Activated T-helper 2 cell treated with anti-CD3 and anti-CD28 coated beads, Interferon-gamma antibody, Interleukin-2, Interleukin-4, amounts not matched to agents 10 μg/mL and 5 μg/mL and 100 μg/mL, durations not matched to agents 14 hours and 24 hours and 36 hours (primary cell): ENCODE measurements at regions of chr17 and their contacts with region 1.

Region 1: DNA sequence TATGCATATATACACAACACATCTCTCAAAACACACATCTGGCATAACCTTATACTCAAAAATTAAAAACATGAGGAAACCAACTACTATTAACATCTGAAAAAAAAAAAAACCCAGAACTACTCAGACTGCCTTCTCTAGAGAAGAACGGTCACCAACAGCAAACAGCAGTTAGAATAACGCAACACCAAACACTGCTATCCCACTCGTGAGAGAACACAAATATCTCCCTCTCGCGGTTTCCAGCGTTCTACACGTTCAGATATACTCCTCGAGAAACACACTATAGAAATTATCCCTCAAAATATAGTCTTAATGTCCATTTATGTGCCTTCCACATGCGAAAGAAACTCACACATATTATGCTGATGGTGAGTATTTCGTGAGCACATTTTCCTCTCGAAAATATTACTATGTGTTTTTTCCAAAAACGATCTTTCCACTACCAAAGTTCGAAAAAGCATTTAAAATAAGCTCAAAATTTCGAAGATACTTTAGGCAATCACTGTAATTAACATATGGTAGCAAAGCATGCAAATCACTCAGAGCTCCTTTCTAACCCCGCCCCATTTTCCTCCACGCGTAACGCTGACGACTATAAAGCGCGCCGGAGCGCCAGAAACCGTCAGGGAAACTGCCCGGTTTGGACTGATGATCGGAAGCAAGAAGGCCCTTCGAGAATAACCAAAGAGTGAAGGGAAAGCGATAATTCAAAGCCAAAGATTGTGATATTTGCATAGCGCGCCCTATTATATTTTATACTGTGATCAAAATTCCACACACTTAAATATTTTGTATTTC is 60.1 kb downstream of the TEX14 start:
- DNase-seq: peak; percentile 95
- H3K4me3 Mint-ChIP-seq: no peak overlapping the region
- H3K27ac Mint-ChIP-seq: no peak overlapping the region
- H3K4me1 Mint-ChIP-seq: peaks cover 5% of the 10 kb centered on the region
- H3K27me3 Mint-ChIP-seq: no peaks in the 10 kb centered on the region

Region 2: GRCh38 chr17:58337600-58338453 is 293.9 kb before region 1 on chr17:
- intact Hi-C with region 1: loop called (anchors 5 kb)
- DNase-seq: peak; percentile 93
- H3K4me3 Mint-ChIP-seq: peak overlapping the region; percentile 99
- H3K27ac Mint-ChIP-seq: peak overlapping the region; percentile 99
- H3K4me1 Mint-ChIP-seq: peaks cover 35% of the 10 kb centered on the region
- H3K27me3 Mint-ChIP-seq: no peaks in the 10 kb centered on the region

Region 3: DNA sequence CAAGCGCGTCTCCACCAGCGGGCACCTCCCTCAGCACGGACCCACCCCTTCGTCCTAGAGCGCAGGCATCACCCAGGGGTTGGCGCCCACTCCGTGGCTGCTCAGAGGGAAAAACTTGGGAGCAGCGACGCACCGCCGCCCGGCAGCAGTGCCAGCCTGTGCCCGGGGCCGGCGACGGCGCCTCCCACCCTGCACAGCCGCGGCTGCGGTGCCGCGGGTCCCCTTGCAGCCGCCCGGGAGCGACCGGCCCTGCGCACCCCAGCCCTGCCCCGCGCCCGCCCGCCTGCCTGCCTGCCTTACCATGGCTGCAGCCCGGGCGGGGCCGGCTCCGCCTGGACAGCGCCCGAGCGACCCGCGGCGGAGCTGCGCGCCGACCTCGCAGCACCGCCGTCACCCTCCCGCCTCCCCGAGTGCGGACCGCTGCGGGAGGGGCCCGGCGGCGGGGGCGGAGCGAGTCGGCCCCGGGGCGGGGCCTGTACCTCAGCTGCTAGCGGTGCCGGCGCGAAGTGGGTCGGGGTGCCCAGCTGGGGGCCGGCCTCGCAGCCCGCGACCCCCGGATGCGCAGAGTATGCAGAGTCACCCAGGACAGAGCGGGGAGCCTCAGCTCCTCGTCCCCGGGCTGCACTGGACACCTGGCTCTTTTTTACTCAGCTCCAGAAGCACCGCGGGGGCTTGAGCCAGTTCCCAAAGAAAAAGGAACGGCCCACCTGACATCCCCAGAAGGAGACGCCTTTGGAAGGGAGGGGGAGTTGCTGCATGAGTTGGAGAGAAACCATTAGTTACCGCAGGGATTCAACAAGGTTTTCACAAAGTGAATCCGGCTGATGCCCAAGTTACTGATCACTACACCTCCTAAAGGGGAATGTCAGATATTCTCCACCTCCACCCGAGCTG is 99.8 kb before region 1 on chr17:
- intact Hi-C with region 1: loop called (anchors 5 kb)
- DNase-seq: peak; percentile 62
- H3K4me3 Mint-ChIP-seq: peak overlapping the region; percentile 22
- H3K27ac Mint-ChIP-seq: no peak overlapping the region
- H3K4me1 Mint-ChIP-seq: peaks cover 11% of the 10 kb centered on the region
- H3K27me3 Mint-ChIP-seq: peaks cover 56% of the 10 kb centered on the region

Region 4: DNA sequence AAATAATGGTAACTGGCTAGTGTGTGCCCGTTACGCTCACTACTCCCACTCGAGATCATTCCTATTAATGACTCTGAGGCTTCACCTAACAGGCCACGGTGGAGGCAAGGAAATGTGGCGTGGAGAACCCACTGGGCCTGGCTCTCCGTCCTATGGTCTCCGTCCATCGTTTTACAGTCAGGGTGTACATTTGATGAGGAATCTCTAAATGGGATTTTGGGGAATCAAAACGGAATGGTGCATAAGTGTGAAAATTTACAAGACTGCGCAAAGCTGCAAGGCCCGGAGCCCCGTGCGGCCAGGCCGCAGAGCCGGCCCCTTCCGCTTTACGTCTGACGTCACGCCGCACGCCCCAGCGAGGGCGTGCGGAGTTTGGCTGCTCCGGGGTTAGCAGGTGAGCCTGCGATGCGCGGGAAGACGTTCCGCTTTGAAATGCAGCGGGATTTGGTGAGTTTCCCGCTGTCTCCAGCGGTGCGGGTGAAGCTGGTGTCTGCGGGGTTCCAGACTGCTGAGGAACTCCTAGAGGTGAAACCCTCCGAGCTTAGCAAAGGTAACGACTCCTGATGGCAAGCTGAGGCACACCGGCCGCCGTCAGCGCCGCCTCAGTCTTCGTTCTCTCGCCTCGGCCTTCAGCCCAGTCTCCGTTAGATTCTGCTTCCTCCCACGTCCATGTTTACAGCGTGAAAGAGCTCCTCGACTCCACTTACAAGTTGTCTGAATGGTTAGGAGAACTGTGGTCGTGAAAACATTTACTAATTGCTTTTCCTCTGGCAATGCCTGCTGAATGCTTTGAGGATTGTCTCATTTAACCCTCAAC is 60.7 kb after region 1 on chr17 and contains the start of gene RAD51C:
- intact Hi-C with region 1: loop called (anchors 2 kb)
- DNase-seq: peak; percentile 85
- H3K4me3 Mint-ChIP-seq: peak within 1 kb of the TSS; percentile 91
- H3K27ac Mint-ChIP-seq: peak within 1 kb of the TSS; percentile 91
- H3K4me1 Mint-ChIP-seq: peaks cover 25% of the 10 kb centered on the region
- H3K27me3 Mint-ChIP-seq: peaks cover 3% of the 10 kb centered on the region
- total RNA-seq, gene RAD51C: 58.1 and 62.7 TPM in 2 replicates

Region 5: GRCh38 chr17:59155439-59156182 is 523.9 kb after region 1 on chr17 and contains the start of gene PRR11:
- intact Hi-C with region 1: loop called (anchors 2 kb)
- DNase-seq: peak; percentile 95
- H3K4me3 Mint-ChIP-seq: no peak within 1 kb of the TSS
- H3K27ac Mint-ChIP-seq: no peak within 1 kb of the TSS
- H3K4me1 Mint-ChIP-seq: peaks cover 51% of the 10 kb centered on the region
- H3K27me3 Mint-ChIP-seq: no peaks in the 10 kb centered on the region
- total RNA-seq, gene PRR11: 50.2 and 51.5 TPM in 2 replicates